ENCODE measurements at regions of chr6 and their contacts with region 1.

Region 1: DNA sequence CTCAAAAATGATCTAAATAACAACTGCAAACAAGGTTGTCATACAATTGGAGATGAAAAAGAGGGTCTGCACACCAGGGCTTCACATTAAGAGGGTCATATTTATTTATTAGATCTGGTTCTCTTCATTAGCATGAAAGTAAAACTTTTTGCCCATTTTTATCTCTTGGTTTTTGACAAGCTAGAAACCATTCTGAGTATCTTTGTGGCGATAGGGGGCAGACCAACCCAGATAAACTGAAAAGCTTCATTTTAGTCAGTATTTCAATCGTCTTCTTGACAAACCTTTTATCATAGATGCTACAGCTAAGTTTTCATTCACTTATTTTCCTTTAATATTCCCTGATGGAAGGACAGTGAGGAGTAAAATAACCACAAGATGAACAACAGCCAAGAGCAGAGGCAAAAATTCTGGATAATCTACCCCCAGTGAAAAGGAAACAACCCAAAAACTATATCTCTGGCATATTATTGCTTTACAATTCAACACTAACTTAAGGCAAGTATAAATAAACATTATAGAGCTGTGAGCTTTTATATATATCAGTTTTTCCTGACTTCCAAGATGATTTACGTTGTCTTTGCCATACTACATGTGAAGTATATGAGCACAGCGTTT is 45.2 kb downstream of the THEMIS start:
- DNase-seq: peak; percentile 58
- ATAC-seq: peak; percentile 50; the same call in 1 of the 2 replicates
- H3K4me3 ChIP-seq: no peak overlapping the region
- H3K27ac ChIP-seq: no peak overlapping the region
- H3K4me1 ChIP-seq: peaks cover 7% of the 10 kb centered on the region; the same call in 1 of the 2 replicates
- H3K27me3 ChIP-seq: no peaks in the 10 kb centered on the region
- CTCF ChIP-seq: peak; percentile 68

Region 2: GRCh38 chr6:127710668-127711067 is 145.0 kb before region 1 on chr6:
- CTCF ChIA-PET with region 1: no interaction called
- POLR2A ChIA-PET with region 1: no interaction called
- intact Hi-C with region 1: no loop called
- DNase-seq: no peak
- ATAC-seq: no peak
- H3K4me3 ChIP-seq: no peak overlapping the region
- H3K27ac ChIP-seq: no peak overlapping the region
- H3K4me1 ChIP-seq: no peaks in the 10 kb centered on the region
- H3K27me3 ChIP-seq: peaks cover 24% of the 10 kb centered on the region
- CTCF ChIP-seq: no peak

Region 3: DNA sequence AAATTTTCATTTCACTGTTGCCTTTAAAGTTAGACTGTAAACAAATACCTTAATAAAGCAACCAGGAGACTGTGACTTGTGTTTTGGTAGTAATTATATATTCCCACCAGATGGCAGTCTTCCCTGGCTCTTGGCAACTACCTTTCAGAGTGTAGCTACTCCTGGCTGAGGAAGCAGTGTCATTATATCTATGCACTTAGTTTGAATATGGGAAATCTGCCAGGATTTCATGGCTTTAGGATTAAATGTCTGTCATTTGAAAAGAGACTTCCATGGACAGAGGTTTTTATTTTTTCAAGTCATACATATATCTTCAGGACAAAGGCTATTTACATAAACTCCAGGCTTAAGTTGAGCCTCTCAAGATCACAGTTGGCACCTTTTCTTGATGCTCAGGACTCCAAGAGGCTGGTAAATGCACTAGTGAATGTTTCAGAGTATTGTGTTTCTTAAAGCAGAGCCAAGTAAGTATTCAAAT is 118.6 kb before region 1 on chr6:
- CTCF ChIA-PET with region 1: interaction called, 3 read pairs
- POLR2A ChIA-PET with region 1: no interaction called
- intact Hi-C with region 1: loop called (anchors 10 kb)
- DNase-seq: peak; percentile 71
- ATAC-seq: peak; percentile 87
- H3K4me3 ChIP-seq: no peak overlapping the region
- H3K27ac ChIP-seq: no peak overlapping the region
- H3K4me1 ChIP-seq: no peaks in the 10 kb centered on the region
- H3K27me3 ChIP-seq: peaks cover 14% of the 10 kb centered on the region; the same call in 1 of the 2 replicates
- CTCF ChIP-seq: peak; percentile 75

Region 4: DNA sequence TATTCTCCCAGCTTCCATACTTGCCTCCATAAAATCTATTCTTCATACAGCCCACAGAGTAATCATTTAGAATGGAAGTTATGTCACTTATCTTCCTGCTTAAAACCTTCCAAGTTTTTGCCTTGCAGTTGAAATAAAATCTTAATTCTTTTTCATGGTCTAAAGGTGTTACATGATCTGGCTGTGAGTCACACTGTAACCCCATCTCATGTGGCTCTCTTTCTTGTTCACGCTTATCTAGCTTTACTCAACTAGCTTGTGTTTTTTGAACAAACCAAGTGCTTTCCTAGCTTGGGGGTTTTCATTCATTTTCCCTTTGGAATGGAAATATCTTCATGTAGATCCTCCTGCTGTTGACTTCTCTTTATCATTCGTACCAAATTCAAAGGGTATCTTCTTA is 68.8 kb after region 1 on chr6:
- CTCF ChIA-PET with region 1: no interaction called
- POLR2A ChIA-PET with region 1: no interaction called
- intact Hi-C with region 1: no loop called
- DNase-seq: no peak
- ATAC-seq: peak; percentile 24; the same call in 1 of the 2 replicates
- H3K4me3 ChIP-seq: no peak overlapping the region
- H3K27ac ChIP-seq: no peak overlapping the region
- H3K4me1 ChIP-seq: no peaks in the 10 kb centered on the region
- H3K27me3 ChIP-seq: no peaks in the 10 kb centered on the region
- CTCF ChIP-seq: no peak

Region 5: DNA sequence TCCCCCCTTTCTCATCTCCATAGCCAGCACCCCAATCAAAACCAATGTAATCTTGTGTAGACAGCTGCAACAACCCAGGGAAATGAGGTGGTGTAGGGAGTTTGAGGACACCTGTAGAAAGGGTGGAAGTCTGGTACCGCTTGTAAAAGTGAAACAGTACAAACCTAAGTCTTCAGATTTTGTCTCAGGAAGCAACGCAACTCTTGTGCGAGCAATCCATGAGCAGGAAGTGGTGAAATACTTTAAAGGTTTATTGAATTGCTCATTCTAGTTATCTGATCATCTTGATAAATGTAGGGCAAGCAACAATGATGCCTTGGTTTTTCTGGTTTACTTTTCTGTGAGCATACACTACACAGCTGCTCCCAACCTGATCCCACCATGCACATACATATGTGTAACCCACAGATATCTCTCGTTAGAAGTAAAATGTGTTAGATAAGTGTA is 116.3 kb after region 1 on chr6:
- CTCF ChIA-PET with region 1: no interaction called
- POLR2A ChIA-PET with region 1: no interaction called
- intact Hi-C with region 1: loop called (anchors 1 kb)
- DNase-seq: peak; percentile 89
- ATAC-seq: peak; percentile 94
- H3K4me3 ChIP-seq: peak overlapping the region; percentile 45; the same call in 1 of the 2 replicates
- H3K27ac ChIP-seq: peak overlapping the region; percentile 85
- H3K4me1 ChIP-seq: peaks cover 18% of the 10 kb centered on the region
- H3K27me3 ChIP-seq: no peaks in the 10 kb centered on the region
- CTCF ChIP-seq: no peak

Region 6: GRCh38 chr6:128731249-128732165 is 875.9 kb after region 1 on chr6:
- CTCF ChIA-PET with region 1: no interaction called
- POLR2A ChIA-PET with region 1: no interaction called
- intact Hi-C with region 1: loop called (anchors 5 kb)
- DNase-seq: peak; percentile 65
- ATAC-seq: peak; percentile 74
- H3K4me3 ChIP-seq: no peak overlapping the region
- H3K27ac ChIP-seq: no peak overlapping the region
- H3K4me1 ChIP-seq: no peaks in the 10 kb centered on the region
- H3K27me3 ChIP-seq: no peaks in the 10 kb centered on the region
- CTCF ChIP-seq: peak; percentile 77